ENCODE measurements at regions of chr5 and their contacts with region 1.

Region 1: GRCh38 chr5:55668356-55668755 is 43.8 kb downstream of the SLC38A9 start:
- DNase-seq: peak; percentile 79
- ATAC-seq: peak; percentile 100
- H3K4me3 ChIP-seq: no peak overlapping the region
- H3K27ac ChIP-seq: no peak overlapping the region
- H3K4me1 ChIP-seq: peaks cover 12% of the 10 kb centered on the region
- H3K27me3 ChIP-seq: no peaks in the 10 kb centered on the region
- CTCF ChIP-seq: no peak

Region 2: DNA sequence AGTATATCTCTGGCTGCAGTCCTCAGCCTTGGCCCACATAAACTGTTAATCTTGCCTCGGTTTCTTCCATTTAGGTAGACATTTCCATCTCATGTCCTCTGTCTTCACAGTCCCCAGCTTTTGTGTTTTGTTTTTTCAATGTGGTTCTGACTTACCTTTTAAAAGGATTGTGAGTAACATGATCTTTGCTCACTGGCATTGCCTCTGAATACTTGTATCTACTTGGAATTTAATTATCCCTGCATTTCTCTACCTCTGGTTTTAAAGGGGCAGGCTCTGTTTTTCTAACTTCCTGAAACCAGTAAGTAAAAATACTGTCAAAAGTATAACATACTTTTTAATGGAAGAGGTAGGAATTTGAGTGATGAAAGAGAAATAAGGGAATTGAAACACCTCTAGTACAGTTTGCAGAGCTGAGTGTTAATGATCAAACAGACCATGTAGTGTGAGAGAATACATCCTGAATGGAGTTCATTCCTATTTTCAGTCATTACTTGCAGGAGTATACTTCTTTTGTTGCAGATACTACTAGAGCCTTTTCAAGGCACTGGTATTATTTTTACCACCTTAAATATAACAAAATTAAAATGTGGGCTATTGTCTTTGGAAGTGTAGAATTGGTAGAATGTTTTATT is 297.9 kb before region 1 on chr5:
- CTCF ChIA-PET with region 1: no interaction called
- POLR2A ChIA-PET with region 1: no interaction called
- intact Hi-C with region 1: no loop called
- DNase-seq: no peak
- ATAC-seq: no peak
- H3K4me3 ChIP-seq: no peak overlapping the region
- H3K27ac ChIP-seq: no peak overlapping the region
- H3K4me1 ChIP-seq: no peaks in the 10 kb centered on the region
- H3K27me3 ChIP-seq: no peaks in the 10 kb centered on the region
- CTCF ChIP-seq: no peak

Region 3: DNA sequence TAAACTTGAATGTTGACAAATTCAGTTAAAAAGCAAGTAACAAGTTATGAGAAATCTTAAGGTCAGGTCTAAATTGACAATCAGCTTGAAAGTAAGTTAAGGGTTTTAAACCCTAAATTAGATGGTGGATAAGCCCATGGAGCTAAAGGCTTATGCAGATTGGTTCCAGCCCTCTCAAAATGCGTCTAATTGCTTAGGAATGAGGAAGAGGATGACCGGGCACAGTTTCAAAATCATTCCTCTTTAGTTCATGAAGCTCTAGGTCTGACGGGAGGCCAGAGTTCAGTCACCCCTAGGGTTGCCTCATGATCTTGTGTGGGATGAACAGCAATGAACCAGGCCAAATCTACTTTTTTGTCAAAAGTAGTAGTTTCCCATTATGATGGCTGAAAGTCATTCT is 31.7 kb before region 1 on chr5:
- CTCF ChIA-PET with region 1: no interaction called
- POLR2A ChIA-PET with region 1: interaction called, 27 read pairs
- intact Hi-C with region 1: no loop called
- DNase-seq: peak; percentile 3
- ATAC-seq: no peak
- H3K4me3 ChIP-seq: no peak overlapping the region
- H3K27ac ChIP-seq: no peak overlapping the region
- H3K4me1 ChIP-seq: peaks cover 27% of the 10 kb centered on the region
- H3K27me3 ChIP-seq: no peaks in the 10 kb centered on the region
- CTCF ChIP-seq: no peak